ENCODE measurements at regions of chr19 and their contacts with region 1.

Region 1: DNA sequence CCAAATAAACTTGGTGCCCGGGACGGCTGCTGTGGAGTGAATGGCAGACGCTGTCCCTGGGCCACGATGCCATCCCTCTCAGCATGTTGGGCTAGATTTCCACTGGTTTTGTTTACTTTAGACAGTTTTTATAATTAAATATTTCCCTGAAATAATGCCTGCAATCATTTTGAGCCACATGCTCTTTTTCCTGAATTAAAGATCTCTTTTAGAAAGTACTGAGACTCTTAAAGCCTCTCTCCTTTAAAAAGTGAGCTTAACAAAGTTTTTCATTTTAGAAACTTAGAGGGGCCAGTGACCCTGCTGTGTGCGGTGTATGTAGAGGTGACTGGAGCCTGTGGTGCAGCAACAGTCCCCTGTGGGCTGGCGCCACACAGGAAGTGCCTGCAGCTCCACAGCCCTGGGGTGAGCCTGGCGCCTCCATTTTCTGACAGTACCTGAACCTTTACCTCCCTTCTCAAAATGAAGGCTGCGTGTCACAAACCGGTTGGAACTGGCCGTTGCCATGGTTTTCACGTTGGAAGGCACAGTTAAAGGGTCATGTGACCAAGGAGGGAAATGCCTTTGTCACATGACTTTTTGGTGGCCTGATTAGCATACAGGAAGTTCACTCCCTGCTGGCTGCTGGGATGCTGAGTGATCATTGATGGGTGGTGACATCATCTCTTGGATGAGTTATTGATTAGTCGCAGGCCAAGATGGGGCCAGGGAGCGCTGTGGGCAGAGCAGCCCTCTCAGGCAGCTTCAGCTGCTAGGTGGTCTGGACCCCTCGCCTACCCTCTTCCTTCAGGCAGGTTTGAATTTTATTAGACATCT is 26.3 kb downstream of the TSSK6 start:
- DNase-seq: peak; percentile 75 to 97 (median 94)
- ATAC-seq: peak; percentile 85 to 90 (median 88)
- H3K4me3 ChIP-seq: peak overlapping the region; percentile 26 to 44
- H3K4me3 Mint-ChIP-seq: peak overlapping the region; percentile 54 to 79 (median 64)
- H3K27ac ChIP-seq: peak overlapping the region; percentile 98
- H3K27ac Mint-ChIP-seq: peak overlapping the region; percentile 95 to 99
- H3K4me1 ChIP-seq: peaks cover 32 to 70% of the 10 kb centered on the region in 2 experiments
- H3K4me1 Mint-ChIP-seq: peaks cover 53 to 60% (median 58%) of the 10 kb centered on the region in 3 donors
- H3K27me3 ChIP-seq: no peaks in the 10 kb centered on the region
- H3K27me3 Mint-ChIP-seq: no peaks in the 10 kb centered on the region

Region 2: GRCh38 chr19:19361075-19361594 is 127.9 kb before region 1 on chr19:
- CTCF ChIA-PET with region 1: interaction called, 28 to 64 read pairs
- POLR2A ChIA-PET with region 1: interaction called, 3 to 8 read pairs
- DNase-seq: peak in 34 of 35 experiments; percentile 14 to 86 (median 52)
- ATAC-seq: peak; percentile 51 to 63 (median 58)
- H3K4me3 ChIP-seq: no peak overlapping the region
- H3K4me3 Mint-ChIP-seq: peak overlapping the region; percentile 44 to 47 (median 46)
- H3K27ac ChIP-seq: peak overlapping the region; percentile 6
- H3K27ac Mint-ChIP-seq: peak overlapping the region; percentile 28 to 72
- H3K4me1 ChIP-seq: peaks cover 6 to 40% of the 10 kb centered on the region in 2 experiments
- H3K4me1 Mint-ChIP-seq: peaks cover 35 to 40% (median 40%) of the 10 kb centered on the region in 3 donors
- H3K27me3 ChIP-seq: no peaks in the 10 kb centered on the region
- H3K27me3 Mint-ChIP-seq: no peaks in the 10 kb centered on the region

Region 3: DNA sequence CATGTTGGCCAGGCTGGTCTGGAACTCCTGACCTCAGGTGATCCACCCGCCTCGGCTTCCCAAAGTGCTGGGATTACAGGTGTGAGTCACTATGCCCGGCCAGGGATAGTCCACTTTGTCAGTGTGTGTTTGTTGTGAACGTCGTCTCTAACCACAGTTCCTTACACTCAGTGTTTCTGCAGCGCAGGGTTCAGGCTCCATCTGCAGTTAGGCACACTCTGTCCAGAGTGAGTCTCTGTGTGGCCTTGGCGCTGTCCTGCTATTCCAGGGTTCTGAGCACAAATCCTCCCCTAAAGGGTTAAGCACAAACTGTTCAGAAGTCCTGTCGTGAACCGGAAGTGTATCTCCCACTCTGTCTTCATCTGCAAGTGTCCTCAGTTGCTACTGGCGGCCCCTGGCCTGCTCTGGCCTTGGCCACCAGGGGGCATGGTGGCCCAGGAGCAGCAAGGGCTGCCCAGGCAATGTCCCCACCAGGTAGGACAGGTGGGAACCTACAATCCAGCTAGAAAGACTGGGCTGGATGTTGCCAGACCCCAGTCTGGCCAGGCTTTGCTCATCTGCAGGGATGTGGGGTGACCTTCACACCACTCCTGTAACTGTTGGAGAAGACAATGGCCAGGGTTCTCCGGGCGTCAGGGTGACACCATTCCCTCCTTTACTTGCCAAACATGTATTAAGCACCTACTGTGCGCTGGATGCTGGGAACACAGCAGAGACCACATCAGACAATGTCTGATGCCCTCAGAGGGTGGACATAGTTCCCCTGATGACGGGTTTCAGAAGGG is 122.3 kb before region 1 on chr19:
- CTCF ChIA-PET with region 1: interaction called, 28 to 64 read pairs
- POLR2A ChIA-PET with region 1: interaction called, 3 to 8 read pairs
- DNase-seq: peak; percentile 24 to 83 (median 56)
- ATAC-seq: peak; percentile 59 to 86 (median 82)
- H3K4me3 ChIP-seq: no peak overlapping the region
- H3K4me3 Mint-ChIP-seq: peak overlapping the region; percentile 28 to 56 (median 50)
- H3K27ac ChIP-seq: no peak overlapping the region
- H3K27ac Mint-ChIP-seq: peak overlapping the region; percentile 74 to 82
- H3K4me1 ChIP-seq: peaks cover 3 to 31% of the 10 kb centered on the region in 2 experiments
- H3K4me1 Mint-ChIP-seq: peaks cover 20 to 21% (median 20%) of the 10 kb centered on the region in 3 donors
- H3K27me3 ChIP-seq: no peaks in the 10 kb centered on the region
- H3K27me3 Mint-ChIP-seq: no peaks in the 10 kb centered on the region

Region 4: DNA sequence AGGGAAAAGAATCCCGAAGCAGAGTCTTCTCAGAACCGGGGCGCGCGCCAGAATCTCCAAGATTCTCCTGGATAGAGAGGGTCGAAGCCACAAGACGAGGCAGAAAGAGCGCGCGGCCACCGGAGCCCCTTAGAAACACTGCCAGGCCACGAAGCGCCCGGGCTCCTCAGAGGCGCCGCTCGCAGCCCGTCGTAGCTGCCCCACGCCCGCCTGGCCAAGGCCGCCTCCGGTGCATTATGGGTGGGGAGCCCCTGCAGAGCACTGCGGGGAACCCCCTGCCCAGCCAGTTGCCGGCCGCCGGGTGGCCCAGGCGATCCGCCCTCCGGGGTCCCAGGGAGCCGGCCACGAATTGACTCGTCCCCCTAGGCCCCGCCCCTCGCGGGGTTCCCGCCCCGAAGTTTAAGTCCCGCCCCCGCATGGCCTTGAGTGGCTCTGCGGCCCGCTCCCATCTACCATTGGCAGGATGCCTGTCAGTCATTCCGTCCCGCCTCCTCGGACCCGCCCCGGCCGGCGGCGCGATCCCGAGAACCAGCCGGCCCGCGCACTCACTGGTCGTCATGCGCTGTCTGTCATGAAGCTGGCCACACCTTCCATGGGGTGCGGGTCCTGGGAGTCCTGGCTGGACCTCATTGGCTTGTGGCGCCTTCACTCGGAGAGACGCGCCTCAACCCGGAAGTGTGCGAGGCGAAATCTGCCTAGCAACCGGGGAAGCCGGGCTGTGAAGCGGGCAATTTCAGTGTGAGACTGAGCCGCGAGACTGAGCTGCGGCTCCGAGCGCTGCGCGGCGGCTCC is 103.8 kb before region 1 on chr19:
- CTCF ChIA-PET with region 1: interaction called in 1 of 2 experiments, 11 read pairs
- POLR2A ChIA-PET with region 1: no interaction called
- DNase-seq: peak; percentile 95 to 99 (median 98)
- ATAC-seq: peak; percentile 90 to 93 (median 90)
- H3K4me3 ChIP-seq: peak overlapping the region; percentile 92 to 95
- H3K4me3 Mint-ChIP-seq: peak overlapping the region; percentile 87 to 100 (median 93)
- H3K27ac ChIP-seq: peak overlapping the region; percentile 80
- H3K27ac Mint-ChIP-seq: peak overlapping the region; percentile 84 to 92
- H3K4me1 ChIP-seq: peaks cover 32 to 53% of the 10 kb centered on the region in 2 experiments
- H3K4me1 Mint-ChIP-seq: peaks cover 39 to 42% (median 40%) of the 10 kb centered on the region in 3 donors
- H3K27me3 ChIP-seq: no peaks in the 10 kb centered on the region
- H3K27me3 Mint-ChIP-seq: no peaks in the 10 kb centered on the region

Region 5: DNA sequence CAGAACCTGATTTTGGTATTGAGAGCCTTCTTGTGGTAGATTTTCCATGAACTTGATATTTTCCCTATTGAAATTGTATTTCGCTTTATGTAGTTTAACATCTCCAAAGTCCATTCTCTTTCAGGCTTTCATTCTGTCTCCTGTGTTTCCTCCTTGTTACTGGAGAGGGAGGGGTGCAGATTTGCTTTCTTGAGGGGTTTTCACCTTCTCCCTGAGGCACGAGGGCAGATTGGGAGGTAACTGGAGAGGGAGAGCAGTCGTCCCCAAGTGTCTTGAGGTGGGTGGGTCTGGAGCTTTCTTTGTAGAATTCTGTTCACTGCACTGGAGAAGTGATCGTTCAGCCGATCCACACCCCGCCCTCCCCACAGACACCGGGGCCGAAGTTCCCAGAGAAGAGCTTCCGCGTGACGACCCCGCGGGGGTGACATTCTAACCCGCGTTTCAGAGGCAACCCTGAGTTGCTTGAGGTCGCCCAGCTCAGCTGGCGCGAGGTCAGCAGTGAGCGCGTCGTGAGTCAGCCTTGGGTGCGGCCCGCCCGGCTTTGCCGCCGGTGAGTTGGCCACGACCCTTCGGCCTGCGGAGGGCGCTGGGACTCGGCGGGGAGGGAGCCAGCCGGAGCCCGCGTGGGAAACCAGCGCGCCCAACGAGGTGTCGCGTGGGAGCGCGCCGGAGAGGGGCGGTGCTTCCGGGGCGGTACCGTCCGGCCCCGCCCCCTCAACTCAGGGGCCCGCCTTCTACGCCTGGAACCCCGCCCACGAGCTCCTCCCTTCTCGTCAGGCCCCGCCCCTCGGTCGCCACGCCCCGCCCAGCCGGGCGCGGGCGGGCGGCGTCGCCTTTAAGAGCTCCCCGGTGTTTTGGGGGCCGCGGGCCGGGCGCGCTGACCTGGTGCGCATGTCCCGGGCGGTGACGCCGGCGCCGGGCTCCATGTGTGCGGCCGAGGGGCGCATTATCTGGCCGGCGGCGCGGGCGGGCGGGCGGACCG is 83.9 kb before region 1 on chr19 and contains the start of gene GATAD2A:
- CTCF ChIA-PET with region 1: interaction called, 8 to 31 read pairs
- POLR2A ChIA-PET with region 1: interaction called in 1 of 2 experiments, 3 read pairs
- DNase-seq: peak; percentile 72 to 95 (median 86)
- ATAC-seq: peak; percentile 79 to 89 (median 83)
- H3K4me3 ChIP-seq: peak within 1 kb of the TSS; percentile 68 to 69
- H3K4me3 Mint-ChIP-seq: peak within 1 kb of the TSS; percentile 95
- H3K27ac ChIP-seq: peak within 1 kb of the TSS; percentile 76
- H3K27ac Mint-ChIP-seq: peak within 1 kb of the TSS; percentile 91 to 95
- H3K4me1 ChIP-seq: peaks cover 13 to 38% of the 10 kb centered on the region in 2 experiments
- H3K4me1 Mint-ChIP-seq: peaks cover 59 to 69% (median 65%) of the 10 kb centered on the region in 3 donors
- H3K27me3 ChIP-seq: no peaks in the 10 kb centered on the region
- H3K27me3 Mint-ChIP-seq: no peaks in the 10 kb centered on the region
- total RNA-seq, gene GATAD2A: 114 to 144 (median 133) TPM